Psoas muscle (tissue), 8 donors: ENCODE measurements at regions of chr18 and their contacts with region 1.

Region 1: GRCh38 chr18:75161256-75162028 is 47.5 kb downstream of the PTGR3 start:
- DNase-seq: peak; percentile 35 to 63
- ATAC-seq: peak; percentile 76 to 84 (median 80)
- H3K4me3 ChIP-seq: peak overlapping the region; percentile 61
- H3K27ac ChIP-seq: peak overlapping the region; percentile 28
- H3K4me1 ChIP-seq: peaks cover 13% of the 10 kb centered on the region
- H3K27me3 ChIP-seq: peaks cover 0 to 1% (median 0%) of the 10 kb centered on the region in 3 donors
- CTCF ChIP-seq: peak; percentile 19

Region 2: DNA sequence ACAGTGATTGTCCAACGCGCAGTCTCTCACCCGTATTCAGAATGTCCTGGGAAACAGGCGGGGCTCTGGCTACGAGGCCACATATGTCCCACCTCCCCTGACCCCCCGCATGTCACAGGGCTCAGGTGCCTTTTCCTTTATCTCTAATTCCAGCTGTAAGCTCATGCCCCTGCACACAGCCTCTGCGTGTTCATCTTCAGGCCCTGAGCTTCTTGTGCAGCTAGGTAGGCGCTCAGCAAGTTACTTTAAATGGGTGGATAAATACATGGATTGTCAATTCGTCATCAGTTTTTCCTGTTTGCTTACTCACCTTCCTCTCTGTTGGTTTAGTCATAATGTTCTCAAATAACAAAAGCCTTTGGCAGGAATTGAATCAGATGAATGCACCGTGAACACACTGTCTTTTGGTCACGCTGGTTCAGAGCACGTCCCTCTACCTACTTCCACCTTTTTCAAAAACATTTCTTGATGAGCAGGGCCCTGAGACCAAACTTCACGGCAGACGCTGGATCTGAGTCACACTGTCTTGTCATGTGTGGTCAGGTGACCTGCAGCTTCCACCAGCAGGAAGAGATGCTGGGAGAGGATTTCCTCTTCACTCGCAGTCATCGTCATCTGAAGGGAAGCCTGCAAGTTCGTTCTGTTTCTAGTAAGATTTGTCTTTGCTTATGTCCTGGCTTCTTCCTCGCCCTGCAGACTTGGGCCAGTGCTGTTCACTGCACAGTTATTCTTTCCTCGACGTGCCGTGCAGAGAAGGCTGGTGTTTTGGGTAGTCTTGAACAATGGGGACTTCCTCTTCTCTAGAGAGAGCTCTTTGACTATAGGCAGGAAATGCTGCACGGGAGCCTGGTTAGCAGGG is 90.6 kb before region 1 on chr18:
- intact Hi-C with region 1: loop called in 1 of 2 experiments (anchors 5 kb)
- DNase-seq: no peak
- ATAC-seq: peak; percentile 73 to 90 (median 83)
- H3K4me3 ChIP-seq: peak overlapping the region; percentile 28
- H3K27ac ChIP-seq: peak overlapping the region; percentile 72
- H3K4me1 ChIP-seq: no peaks in the 10 kb centered on the region
- H3K27me3 ChIP-seq: no peaks in the 10 kb centered on the region
- CTCF ChIP-seq: no peak

Region 3: DNA sequence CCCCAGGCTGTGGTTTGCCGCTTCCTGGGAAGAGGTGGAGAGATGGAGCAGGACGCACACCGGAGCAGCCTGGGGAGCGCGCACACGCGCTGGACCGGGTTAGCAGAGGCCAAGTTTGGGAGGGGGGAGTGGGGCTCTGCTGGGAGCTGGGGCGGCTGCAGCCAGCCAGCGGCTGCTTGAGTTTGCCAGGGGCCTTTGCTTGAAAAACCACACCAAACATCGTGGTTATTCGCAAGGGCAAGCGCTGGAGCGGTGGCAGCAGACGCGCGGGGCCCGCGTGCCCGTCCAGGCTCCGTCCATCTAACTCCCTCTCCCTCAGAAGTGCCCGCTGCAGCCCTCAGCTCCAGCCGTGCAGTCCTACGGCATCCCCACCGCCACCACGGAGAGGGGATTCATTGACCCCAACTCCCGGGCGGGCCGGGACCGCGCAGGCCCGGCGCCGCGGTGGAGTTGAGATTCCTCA is 42.9 kb after region 1 on chr18:
- intact Hi-C with region 1: loop called in 1 of 2 experiments (anchors 5 kb)
- DNase-seq: peak in 1 of 2 donors; percentile 60
- ATAC-seq: no peak
- H3K4me3 ChIP-seq: peak overlapping the region; percentile 87
- H3K27ac ChIP-seq: peak overlapping the region; percentile 99
- H3K4me1 ChIP-seq: peaks cover 61% of the 10 kb centered on the region
- H3K27me3 ChIP-seq: no peaks in the 10 kb centered on the region
- CTCF ChIP-seq: no peak